Panc1 (cell line): ENCODE measurements at regions of chr1 and their contacts with region 1.

Region 1: GRCh38 chr1:16078925-16079656 is 5.6 kb upstream of the FAM131C start:
- DNase-seq: peak; percentile 71
- ATAC-seq: peak; percentile 79
- H3K4me3 ChIP-seq: no peak overlapping the region
- H3K27ac ChIP-seq: peak overlapping the region; percentile 74
- H3K4me1 ChIP-seq: peaks cover 47% of the 10 kb centered on the region
- H3K27me3 ChIP-seq: no peaks in the 10 kb centered on the region
- CTCF ChIP-seq: peak; percentile 92

Region 2: DNA sequence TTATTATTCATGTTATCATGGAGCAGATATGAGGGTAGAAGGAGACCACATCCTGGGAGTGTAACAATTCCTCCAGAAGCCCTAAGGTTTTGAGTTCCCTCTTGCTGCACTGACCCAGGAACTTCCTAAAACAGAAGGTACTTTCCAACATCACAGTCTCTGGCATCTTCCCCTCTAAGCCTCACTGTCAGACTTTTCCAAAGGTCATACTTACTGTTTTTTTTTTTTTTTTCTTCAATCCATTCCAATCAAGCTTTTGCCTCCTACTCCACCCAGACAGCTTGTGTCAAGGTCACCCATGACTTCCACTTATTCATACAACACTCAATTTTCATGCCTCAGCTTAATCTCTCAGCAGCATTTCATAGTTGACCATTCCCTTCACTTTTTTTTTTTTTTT is 253.3 kb before region 1 on chr1:
- CTCF ChIA-PET with region 1: no interaction called
- POLR2A ChIA-PET with region 1: no interaction called
- in situ Hi-C with region 1: no loop called
- intact Hi-C with region 1: no loop called
- DNase-seq: no peak
- ATAC-seq: peak; percentile 32; the same call in 1 of the 2 replicates
- H3K4me3 ChIP-seq: no peak overlapping the region
- H3K27ac ChIP-seq: peak overlapping the region; percentile 8; the same call in 1 of the 2 replicates
- H3K4me1 ChIP-seq: peaks cover 4% of the 10 kb centered on the region; the same call in 1 of the 2 replicates
- H3K27me3 ChIP-seq: no peaks in the 10 kb centered on the region
- CTCF ChIP-seq: no peak

Region 3: DNA sequence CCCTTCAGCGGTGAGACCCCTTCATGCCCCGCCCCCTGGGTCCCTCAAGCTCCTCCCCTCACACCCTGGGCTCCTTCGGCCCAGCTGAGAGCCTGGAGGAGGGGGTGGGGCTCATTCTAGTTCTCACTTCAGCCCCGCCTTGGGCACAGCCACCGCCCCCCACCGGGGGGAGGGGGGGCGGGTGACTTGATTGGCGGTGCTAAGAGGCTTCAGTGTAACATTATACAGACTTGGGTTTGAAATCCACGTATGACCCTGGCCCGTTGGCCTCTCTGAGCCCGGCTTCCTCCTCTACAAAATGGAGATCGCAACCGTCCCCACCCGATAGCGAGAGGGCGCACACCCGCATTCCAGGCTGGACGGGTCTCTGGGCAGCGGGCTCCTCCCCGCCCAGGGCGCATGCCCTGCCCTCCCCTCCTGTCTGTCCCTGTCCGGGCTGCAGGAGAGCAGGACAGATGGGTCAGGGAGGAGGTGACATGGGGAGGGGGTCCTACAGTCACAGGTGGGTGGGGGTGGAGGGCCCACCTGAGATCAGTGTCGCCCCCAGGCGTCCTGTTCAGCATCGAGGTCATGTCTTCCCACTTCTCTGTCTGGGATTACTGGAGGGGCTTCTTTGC is 30.4 kb before region 1 on chr1:
- CTCF ChIA-PET with region 1: interaction called, 11 read pairs
- POLR2A ChIA-PET with region 1: no interaction called
- in situ Hi-C with region 1: no loop called
- intact Hi-C with region 1: no loop called
- DNase-seq: no peak
- ATAC-seq: peak; percentile 59
- H3K4me3 ChIP-seq: peak overlapping the region; percentile 30 to 45
- H3K27ac ChIP-seq: 0 out of 2 replicates have a peak overlapping the region, but pooled peaks have one; percentile 29
- H3K4me1 ChIP-seq: no peaks in the 10 kb centered on the region
- H3K27me3 ChIP-seq: no peaks in the 10 kb centered on the region
- CTCF ChIP-seq: no peak; the same call in 1 of the 2 replicates

Region 4: GRCh38 chr1:16155532-16156410 is 76.7 kb after region 1 on chr1 and contains the start of gene EPHA2:
- CTCF ChIA-PET with region 1: interaction called, 14 read pairs
- POLR2A ChIA-PET with region 1: interaction called, 13 read pairs
- in situ Hi-C with region 1: no loop called
- intact Hi-C with region 1: no loop called
- DNase-seq: no peak
- ATAC-seq: peak; percentile 81
- H3K4me3 ChIP-seq: peak within 1 kb of the TSS; percentile 91 to 93
- H3K27ac ChIP-seq: peak within 1 kb of the TSS; percentile 100
- H3K4me1 ChIP-seq: peaks cover 51% of the 10 kb centered on the region
- H3K27me3 ChIP-seq: no peaks in the 10 kb centered on the region
- CTCF ChIP-seq: no peak
- total RNA-seq, gene EPHA2: 263 TPM

Region 5: DNA sequence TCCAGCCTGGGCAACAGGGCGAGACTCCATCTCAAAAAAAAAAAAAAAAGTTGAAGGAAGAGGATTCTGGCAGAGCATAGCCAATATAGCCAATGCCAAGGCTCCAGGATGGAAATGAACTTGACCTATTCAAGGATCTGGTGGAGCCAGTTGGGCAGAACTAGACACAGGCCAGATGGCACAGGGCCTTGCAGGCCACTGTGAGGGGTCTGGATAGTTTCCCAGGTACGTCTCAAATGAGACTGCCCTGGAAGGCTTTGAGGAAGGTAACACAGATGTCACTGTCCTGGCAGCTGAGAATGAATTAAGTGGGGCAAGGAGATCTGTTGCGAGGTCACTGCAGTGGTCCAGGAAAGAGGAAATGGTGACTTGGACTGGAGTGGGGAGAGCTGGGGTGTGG is 145.4 kb after region 1 on chr1:
- CTCF ChIA-PET with region 1: no interaction called
- POLR2A ChIA-PET with region 1: no interaction called
- in situ Hi-C with region 1: no loop called
- intact Hi-C with region 1: no loop called
- DNase-seq: no peak
- ATAC-seq: no peak
- H3K4me3 ChIP-seq: no peak overlapping the region
- H3K27ac ChIP-seq: no peak overlapping the region
- H3K4me1 ChIP-seq: no peaks in the 10 kb centered on the region
- H3K27me3 ChIP-seq: no peaks in the 10 kb centered on the region
- CTCF ChIP-seq: no peak

Region 6: GRCh38 chr1:16243936-16244649 is 165.0 kb after region 1 on chr1:
- CTCF ChIA-PET with region 1: interaction called, 6 read pairs
- POLR2A ChIA-PET with region 1: no interaction called
- in situ Hi-C with region 1: no loop called
- intact Hi-C with region 1: loop called (anchors 2 kb)
- DNase-seq: peak; percentile 74
- ATAC-seq: peak; percentile 91
- H3K4me3 ChIP-seq: no peak overlapping the region
- H3K27ac ChIP-seq: no peak overlapping the region
- H3K4me1 ChIP-seq: peaks cover 4% of the 10 kb centered on the region
- H3K27me3 ChIP-seq: no peaks in the 10 kb centered on the region
- CTCF ChIP-seq: peak; percentile 93

Region 7: GRCh38 chr1:16376971-16377370 is 297.9 kb after region 1 on chr1:
- CTCF ChIA-PET with region 1: interaction called, 12 read pairs
- POLR2A ChIA-PET with region 1: no interaction called
- in situ Hi-C with region 1: no loop called
- intact Hi-C with region 1: no loop called
- DNase-seq: no peak
- ATAC-seq: no peak
- H3K4me3 ChIP-seq: no peak overlapping the region
- H3K27ac ChIP-seq: peak overlapping the region; percentile 80
- H3K4me1 ChIP-seq: peaks cover 66% of the 10 kb centered on the region
- H3K27me3 ChIP-seq: no peaks in the 10 kb centered on the region
- CTCF ChIP-seq: no peak